Naive thymus-derived CD4-positive, alpha-beta T cell (primary cell): ENCODE measurements at regions of chr9 and their contacts with region 1.

Region 1: GRCh38 chr9:99807276-99807852 is 14.3 kb upstream of the NR4A3 start:
- DNase-seq: peak in 8 of 9 donors; percentile 31 to 76 (median 68)
- ATAC-seq: peak; percentile 89
- H3K4me3 ChIP-seq: no peak overlapping the region
- H3K4me3 Mint-ChIP-seq: no peak overlapping the region
- H3K27ac ChIP-seq: no peak overlapping the region
- H3K27ac Mint-ChIP-seq: peak overlapping the region in 4 of 9 donors; percentile 1 to 63 (median 12)
- H3K4me1 ChIP-seq: peaks cover 0 to 5% of the 10 kb centered on the region in 2 donors
- H3K4me1 Mint-ChIP-seq: peaks cover 0 to 23% (median 4%) of the 10 kb centered on the region in 7 donors
- H3K27me3 ChIP-seq: no peaks in the 10 kb centered on the region
- H3K27me3 Mint-ChIP-seq: peaks cover 0 to 12% (median 0%) of the 10 kb centered on the region in 5 donors

Region 2: DNA sequence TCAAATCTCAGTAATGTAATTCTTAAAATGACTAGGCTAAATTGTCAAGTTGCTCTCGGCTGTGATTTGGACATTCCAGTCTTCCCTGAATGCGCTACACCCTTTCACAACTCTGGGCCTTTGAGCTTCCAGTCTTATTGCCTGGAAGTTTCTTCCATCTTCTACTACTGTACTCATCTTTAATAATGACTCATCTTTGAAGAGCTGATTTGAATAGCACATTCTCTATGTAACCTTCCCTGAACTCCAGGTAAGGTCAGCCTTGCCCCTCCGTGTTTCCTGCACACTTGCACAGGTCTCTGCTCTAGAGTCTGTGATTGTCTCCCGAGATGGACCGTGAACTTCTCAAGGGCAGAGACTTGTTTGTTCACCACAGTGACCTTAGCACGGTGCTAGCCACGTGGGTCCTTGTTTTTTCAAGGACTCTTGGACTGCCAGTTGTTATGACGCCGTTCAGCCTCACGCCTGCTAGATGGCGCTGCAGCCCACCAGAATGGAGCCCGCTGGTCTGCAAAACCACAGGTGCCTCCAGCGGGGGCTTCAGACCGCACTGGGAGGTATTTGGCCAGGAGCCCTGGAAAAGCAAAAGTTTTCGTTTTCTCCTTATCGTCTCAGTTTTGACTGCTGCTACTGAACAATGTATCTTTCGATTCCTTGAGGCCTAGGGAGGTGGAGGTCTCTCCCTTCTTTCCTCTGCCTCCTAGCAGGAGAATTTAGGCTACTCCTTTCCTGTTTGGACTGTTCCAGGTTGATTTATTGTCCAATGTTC is 540.9 kb before region 1 on chr9:
- CTCF ChIA-PET with region 1: no interaction called
- POLR2A ChIA-PET with region 1: no interaction called
- intact Hi-C with region 1: loop called (anchors 1 to 5 kb)
- DNase-seq: peak; percentile 12 to 65 (median 34)
- ATAC-seq: peak; percentile 84
- H3K4me3 ChIP-seq: no peak overlapping the region
- H3K4me3 Mint-ChIP-seq: peak overlapping the region in 6 of 10 donors; percentile 1 to 42 (median 13)
- H3K27ac ChIP-seq: no peak overlapping the region
- H3K27ac Mint-ChIP-seq: peak overlapping the region in 1 of 9 donors; percentile 23
- H3K4me1 ChIP-seq: peaks cover 0 to 4% of the 10 kb centered on the region in 2 donors
- H3K4me1 Mint-ChIP-seq: peaks cover 0 to 13% (median 10%) of the 10 kb centered on the region in 7 donors
- H3K27me3 ChIP-seq: no peaks in the 10 kb centered on the region
- H3K27me3 Mint-ChIP-seq: peaks cover 0 to 14% (median 6%) of the 10 kb centered on the region in 5 donors

Region 3: DNA sequence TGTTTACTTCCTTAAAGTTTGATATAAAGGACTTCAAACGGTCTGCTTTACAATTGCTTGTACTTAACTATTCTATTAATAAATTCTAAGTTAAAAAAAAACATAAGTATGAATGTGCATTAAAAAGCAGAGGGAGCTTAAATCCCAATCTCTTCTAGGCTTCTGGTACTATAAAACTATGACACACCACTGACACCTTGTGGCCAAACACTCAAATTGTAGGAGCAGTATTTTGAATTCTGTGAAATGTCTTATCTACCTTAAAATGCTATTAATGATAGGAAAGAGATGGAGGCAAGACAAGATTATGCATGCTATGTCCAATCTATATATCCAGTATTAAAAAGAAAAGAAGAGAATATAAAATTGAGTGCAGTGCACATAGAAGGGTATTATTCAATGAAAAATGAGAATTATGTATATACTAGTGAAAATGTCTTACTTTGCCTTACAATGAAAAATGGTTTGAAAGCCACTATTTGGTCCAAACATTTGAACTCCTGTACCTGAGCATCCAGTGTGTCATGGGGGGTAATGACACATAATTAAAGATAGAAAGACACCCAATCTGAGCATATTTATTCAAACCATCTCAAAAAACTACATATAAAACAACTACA is 203.8 kb after region 1 on chr9:
- CTCF ChIA-PET with region 1: no interaction called
- POLR2A ChIA-PET with region 1: no interaction called
- intact Hi-C with region 1: loop called (anchors 1 kb)
- DNase-seq: peak in 7 of 9 donors; percentile 24 to 63 (median 42)
- ATAC-seq: peak; percentile 67
- H3K4me3 ChIP-seq: no peak overlapping the region
- H3K4me3 Mint-ChIP-seq: no peak overlapping the region
- H3K27ac ChIP-seq: no peak overlapping the region
- H3K27ac Mint-ChIP-seq: no peak overlapping the region
- H3K4me1 ChIP-seq: no peaks in the 10 kb centered on the region
- H3K4me1 Mint-ChIP-seq: peaks cover 0 to 5% (median 0%) of the 10 kb centered on the region in 7 donors
- H3K27me3 ChIP-seq: no peaks in the 10 kb centered on the region
- H3K27me3 Mint-ChIP-seq: no peaks in the 10 kb centered on the region

Region 4: GRCh38 chr9:100216178-100216787 is 408.9 kb after region 1 on chr9:
- CTCF ChIA-PET with region 1: no interaction called
- POLR2A ChIA-PET with region 1: no interaction called
- intact Hi-C with region 1: loop called (anchors 1 kb)
- DNase-seq: peak; percentile 17 to 53 (median 41)
- ATAC-seq: peak; percentile 84
- H3K4me3 ChIP-seq: no peak overlapping the region
- H3K4me3 Mint-ChIP-seq: no peak overlapping the region
- H3K27ac ChIP-seq: no peak overlapping the region
- H3K27ac Mint-ChIP-seq: no peak overlapping the region
- H3K4me1 ChIP-seq: no peaks in the 10 kb centered on the region
- H3K4me1 Mint-ChIP-seq: peaks cover 0 to 9% (median 0%) of the 10 kb centered on the region in 7 donors
- H3K27me3 ChIP-seq: no peaks in the 10 kb centered on the region
- H3K27me3 Mint-ChIP-seq: no peaks in the 10 kb centered on the region

Region 5: GRCh38 chr9:101311758-101312420 is 1504.5 kb after region 1 on chr9:
- CTCF ChIA-PET with region 1: no interaction called
- POLR2A ChIA-PET with region 1: no interaction called
- intact Hi-C with region 1: loop called in 1 of 2 experiments (anchors 5 kb)
- DNase-seq: peak in 7 of 9 donors; percentile 17 to 58 (median 54)
- ATAC-seq: peak; percentile 71
- H3K4me3 ChIP-seq: no peak overlapping the region
- H3K4me3 Mint-ChIP-seq: no peak overlapping the region
- H3K27ac ChIP-seq: no peak overlapping the region
- H3K27ac Mint-ChIP-seq: peak overlapping the region in 1 of 9 donors; percentile 39
- H3K4me1 ChIP-seq: no peaks in the 10 kb centered on the region
- H3K4me1 Mint-ChIP-seq: no peaks in the 10 kb centered on the region
- H3K27me3 ChIP-seq: no peaks in the 10 kb centered on the region
- H3K27me3 Mint-ChIP-seq: peaks cover 0 to 22% (median 7%) of the 10 kb centered on the region in 5 donors